ENCODE measurements at regions of chr17 and their contacts with region 1.

Region 1: DNA sequence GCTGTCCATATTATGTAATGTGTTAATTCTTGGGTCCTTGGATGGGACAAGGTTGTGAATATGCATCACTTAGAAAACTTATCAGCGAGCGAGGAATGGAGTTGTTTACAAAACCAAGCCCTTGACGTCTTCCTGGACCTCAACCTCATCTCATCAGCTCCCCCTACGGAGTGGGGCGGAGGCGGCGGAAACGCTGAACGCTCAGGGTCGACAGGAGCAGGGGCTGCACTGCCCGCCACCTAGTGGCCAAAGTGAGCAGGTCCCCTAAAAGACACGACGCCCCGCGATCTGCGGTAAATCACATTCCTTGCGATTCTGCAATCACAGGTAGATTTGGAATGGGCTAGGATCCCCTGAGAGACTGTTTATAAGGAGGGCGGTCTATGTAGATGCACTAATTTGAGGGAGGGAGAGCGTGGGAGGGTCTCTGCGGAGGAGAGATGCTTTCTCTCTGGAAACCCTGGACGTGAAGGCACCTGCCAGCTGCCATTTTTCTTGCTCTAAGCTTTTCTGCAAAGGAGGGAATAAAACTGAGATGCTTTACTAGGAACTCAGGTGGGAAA is 5.4 kb upstream of the ICAM2 start:
- DNase-seq: no peak
- H3K4me3 ChIP-seq: peak overlapping the region; percentile 20
- CTCF ChIP-seq: peak; percentile 90

Region 2: GRCh38 chr17:63881876-63882601 is 143.8 kb before region 1 on chr17 and contains the start of gene GH2:
- CTCF ChIA-PET with region 1: interaction called, 49 read pairs
- POLR2A ChIA-PET with region 1: no interaction called
- DNase-seq: no peak
- H3K4me3 ChIP-seq: no peak within 1 kb of the TSS
- CTCF ChIP-seq: peak; percentile 58

Region 3: DNA sequence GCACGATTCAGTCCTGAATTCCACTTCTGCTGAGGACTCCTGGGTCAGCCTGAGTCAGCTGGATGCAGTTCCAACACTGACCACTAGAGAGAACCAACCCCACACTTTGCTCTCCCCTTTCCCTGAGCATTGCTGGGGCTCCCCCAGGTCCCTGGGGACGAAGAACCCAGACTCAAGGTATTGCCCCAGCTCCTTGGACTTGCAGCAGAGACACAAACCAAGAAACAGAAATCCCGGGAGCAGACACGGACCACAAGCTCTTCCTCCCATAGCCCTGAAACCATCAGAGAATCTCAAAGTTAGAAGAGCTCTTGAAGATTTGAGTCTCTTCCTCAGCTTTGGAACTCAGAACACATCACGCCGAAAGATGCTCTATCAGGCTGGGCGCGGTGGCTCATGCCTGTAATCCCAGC is 106.5 kb before region 1 on chr17:
- CTCF ChIA-PET with region 1: interaction called, 246 read pairs
- POLR2A ChIA-PET with region 1: no interaction called
- DNase-seq: no peak
- H3K4me3 ChIP-seq: no peak overlapping the region
- CTCF ChIP-seq: peak; percentile 89

Region 4: GRCh38 chr17:63984651-63985386 is 41.0 kb before region 1 on chr17:
- CTCF ChIA-PET with region 1: interaction called, 13 read pairs
- POLR2A ChIA-PET with region 1: no interaction called
- DNase-seq: peak; percentile 77
- H3K4me3 ChIP-seq: no peak overlapping the region
- CTCF ChIP-seq: no peak

Region 5: GRCh38 chr17:64056269-64057005 is 30.6 kb after region 1 on chr17:
- CTCF ChIA-PET with region 1: interaction called, 224 read pairs
- POLR2A ChIA-PET with region 1: interaction called, 4 read pairs
- DNase-seq: no peak
- H3K4me3 ChIP-seq: no peak overlapping the region
- CTCF ChIP-seq: no peak

Region 6: DNA sequence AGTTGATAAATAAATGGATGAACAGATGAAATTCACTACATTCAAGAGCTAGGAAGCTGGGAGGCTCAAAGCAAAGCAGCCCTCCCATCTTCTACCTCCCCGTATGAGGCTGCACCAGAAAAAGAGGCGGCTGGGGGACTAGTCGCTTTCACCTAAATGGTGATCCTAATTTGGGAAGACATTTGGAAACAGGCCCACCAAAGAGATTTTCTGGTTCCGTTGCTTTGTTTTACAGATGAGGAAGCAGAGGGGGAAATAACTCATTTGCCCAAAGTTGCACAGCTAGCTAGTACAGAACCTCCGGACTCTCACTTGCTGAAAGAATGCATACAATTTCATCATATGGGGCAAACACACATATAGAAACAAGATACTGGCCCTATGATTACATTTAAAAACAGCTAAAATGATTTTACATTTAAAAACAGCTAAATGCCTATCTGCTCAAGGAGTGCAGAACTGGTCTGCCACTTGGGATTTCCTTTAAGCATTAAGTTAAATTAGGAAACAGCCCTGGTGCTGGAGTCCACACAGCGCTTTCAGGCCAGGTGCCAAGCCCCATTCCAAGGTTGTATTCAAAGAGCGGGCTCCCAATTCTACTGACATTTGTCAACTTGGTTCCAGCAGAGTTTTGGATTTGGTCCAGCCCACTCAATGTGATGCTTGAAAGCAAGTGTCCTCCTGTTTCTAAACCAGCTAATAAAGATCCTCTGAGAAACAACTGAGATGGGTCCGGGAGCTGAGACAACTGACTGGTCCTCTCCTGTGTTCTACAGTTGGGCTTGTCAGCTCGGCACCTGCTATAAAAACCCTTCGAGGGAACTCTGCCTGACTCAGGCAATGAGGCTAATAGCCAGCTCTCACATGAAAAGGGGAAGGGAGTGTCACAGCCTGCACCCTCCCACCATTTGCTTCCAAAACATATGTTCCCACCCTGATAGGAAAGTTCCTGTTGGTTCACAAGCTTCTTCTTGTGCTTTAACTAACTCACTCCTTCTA is 92.5 kb after region 1 on chr17:
- CTCF ChIA-PET with region 1: interaction called, 1,118 read pairs
- POLR2A ChIA-PET with region 1: no interaction called
- DNase-seq: no peak
- H3K4me3 ChIP-seq: no peak overlapping the region
- CTCF ChIP-seq: no peak

Region 7: GRCh38 chr17:64183815-64184214 is 158.0 kb after region 1 on chr17:
- CTCF ChIA-PET with region 1: no interaction called
- POLR2A ChIA-PET with region 1: no interaction called
- DNase-seq: no peak
- H3K4me3 ChIP-seq: no peak overlapping the region
- CTCF ChIP-seq: no peak